Esophagus muscularis mucosa (tissue), 4 donors: ENCODE measurements at regions of chr3 and their contacts with region 1.

Region 1: GRCh38 chr3:13475836-13476590 is 4.1 kb upstream of the HDAC11 start:
- DNase-seq: no peak
- H3K4me3 ChIP-seq: no peak overlapping the region
- H3K27ac ChIP-seq: no peak overlapping the region
- H3K4me1 ChIP-seq: peaks cover 12 to 20% (median 16%) of the 10 kb centered on the region in 4 donors
- H3K27me3 ChIP-seq: peaks cover 0 to 11% (median 0%) of the 10 kb centered on the region in 4 donors
- CTCF ChIP-seq: no peak
- EP300 ChIP-seq: no peak
- POLR2A ChIP-seq: no peak

Region 2: GRCh38 chr3:13452490-13453335 is 23.3 kb before region 1 on chr3:
- intact Hi-C with region 1: loop called (anchors 2 kb)
- DNase-seq: no peak
- H3K4me3 ChIP-seq: peak overlapping the region; percentile 55 to 66 (median 60)
- H3K27ac ChIP-seq: peak overlapping the region; percentile 77 to 88 (median 83)
- H3K4me1 ChIP-seq: peaks cover 10 to 15% (median 11%) of the 10 kb centered on the region in 4 donors
- H3K27me3 ChIP-seq: no peaks in the 10 kb centered on the region
- CTCF ChIP-seq: peak; percentile 59 to 70 (median 63)
- EP300 ChIP-seq: no peak
- POLR2A ChIP-seq: no peak

Region 3: GRCh38 chr3:13518516-13518953 is 42.5 kb after region 1 on chr3:
- intact Hi-C with region 1: no loop called
- DNase-seq: no peak
- H3K4me3 ChIP-seq: no peak overlapping the region
- H3K27ac ChIP-seq: peak overlapping the region; percentile 45 to 60 (median 52)
- H3K4me1 ChIP-seq: peaks cover 34 to 42% (median 39%) of the 10 kb centered on the region in 4 donors
- H3K27me3 ChIP-seq: peaks cover 0 to 17% (median 0%) of the 10 kb centered on the region in 4 donors
- CTCF ChIP-seq: no peak
- EP300 ChIP-seq: no peak
- POLR2A ChIP-seq: no peak